K562 (cell line): ENCODE measurements at regions of chr15 and their contacts with region 1.

Region 1: DNA sequence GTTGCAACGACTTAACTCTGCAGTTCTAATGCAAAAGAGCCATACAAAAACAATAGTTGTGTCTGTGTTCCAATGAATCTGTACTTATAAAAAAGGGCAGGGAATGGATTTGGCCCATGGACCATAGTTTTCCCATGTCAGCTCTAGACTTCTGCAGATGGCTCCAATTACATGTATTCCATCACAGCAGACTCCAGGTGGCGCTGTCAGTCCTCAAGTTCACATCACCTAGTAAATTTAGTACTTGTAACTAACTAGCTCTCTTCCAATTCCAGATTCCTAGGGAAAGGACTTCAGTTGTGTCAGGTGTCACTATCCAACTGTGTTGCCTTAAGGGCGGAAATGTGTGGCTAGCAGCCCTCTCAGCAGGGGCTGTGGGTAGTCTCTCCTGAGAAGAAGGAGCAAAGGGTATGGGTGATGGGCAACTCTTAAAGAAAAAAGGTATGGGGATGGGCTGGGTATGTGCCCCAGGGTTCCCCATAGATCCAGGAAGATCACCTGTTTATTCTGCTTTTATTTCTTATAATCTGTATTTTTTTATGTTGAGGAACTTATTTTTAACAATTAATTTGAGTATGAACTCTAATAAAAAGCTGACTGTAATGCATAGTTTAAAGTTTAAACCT is 36.2 kb downstream of the BBS4 start:
- DNase-seq: peak; percentile 21 to 73 (median 40)
- ATAC-seq: peak; percentile 79
- H3K4me3 ChIP-seq: no peak overlapping the region
- H3K27ac ChIP-seq: no peak overlapping the region
- H3K4me1 ChIP-seq: no peaks in the 10 kb centered on the region
- H3K27me3 ChIP-seq: no peaks in the 10 kb centered on the region
- CTCF ChIP-seq: peak; percentile 64 to 83 (median 78)
- EP300 ChIP-seq: no peak
- POLR2A ChIP-seq: no peak
- RAD21 ChIP-seq: peak; percentile 43 to 70

Region 2: DNA sequence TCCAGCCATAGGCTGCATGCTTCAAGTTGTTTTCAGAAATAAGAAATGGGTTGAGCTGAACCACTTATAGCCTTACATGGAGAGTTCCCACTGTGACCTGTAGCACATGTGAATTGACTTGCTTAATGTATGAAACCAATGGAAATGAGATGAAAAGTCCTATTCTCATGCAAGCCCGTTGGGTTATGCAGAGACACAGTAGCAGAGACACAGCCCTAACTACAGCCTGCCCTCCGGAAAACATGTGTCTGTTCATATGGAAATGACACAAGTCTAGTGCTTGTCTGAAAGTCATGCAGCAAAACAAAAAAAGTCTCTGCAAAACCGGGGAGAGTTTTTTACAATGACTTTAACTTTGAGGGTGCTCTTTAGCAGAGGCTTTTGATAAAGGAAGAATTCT is 50.6 kb before region 1 on chr15:
- CTCF ChIA-PET with region 1: no interaction called
- POLR2A ChIA-PET with region 1: no interaction called
- in situ Hi-C with region 1: no loop called
- intact Hi-C with region 1: no loop called
- DNase-seq: no peak
- ATAC-seq: no peak; the same call in 2 of the 3 replicates
- H3K4me3 ChIP-seq: no peak overlapping the region
- H3K27ac ChIP-seq: no peak overlapping the region
- H3K4me1 ChIP-seq: peaks cover 0 to 3% of the 10 kb centered on the region in 2 experiments; a peak in 2 of 5 replicates
- H3K27me3 ChIP-seq: peaks cover 14 to 16% of the 10 kb centered on the region in 2 experiments; a peak in 3 of 5 replicates
- CTCF ChIP-seq: no peak
- EP300 ChIP-seq: no peak
- POLR2A ChIP-seq: no peak
- RAD21 ChIP-seq: no peak

Region 3: DNA sequence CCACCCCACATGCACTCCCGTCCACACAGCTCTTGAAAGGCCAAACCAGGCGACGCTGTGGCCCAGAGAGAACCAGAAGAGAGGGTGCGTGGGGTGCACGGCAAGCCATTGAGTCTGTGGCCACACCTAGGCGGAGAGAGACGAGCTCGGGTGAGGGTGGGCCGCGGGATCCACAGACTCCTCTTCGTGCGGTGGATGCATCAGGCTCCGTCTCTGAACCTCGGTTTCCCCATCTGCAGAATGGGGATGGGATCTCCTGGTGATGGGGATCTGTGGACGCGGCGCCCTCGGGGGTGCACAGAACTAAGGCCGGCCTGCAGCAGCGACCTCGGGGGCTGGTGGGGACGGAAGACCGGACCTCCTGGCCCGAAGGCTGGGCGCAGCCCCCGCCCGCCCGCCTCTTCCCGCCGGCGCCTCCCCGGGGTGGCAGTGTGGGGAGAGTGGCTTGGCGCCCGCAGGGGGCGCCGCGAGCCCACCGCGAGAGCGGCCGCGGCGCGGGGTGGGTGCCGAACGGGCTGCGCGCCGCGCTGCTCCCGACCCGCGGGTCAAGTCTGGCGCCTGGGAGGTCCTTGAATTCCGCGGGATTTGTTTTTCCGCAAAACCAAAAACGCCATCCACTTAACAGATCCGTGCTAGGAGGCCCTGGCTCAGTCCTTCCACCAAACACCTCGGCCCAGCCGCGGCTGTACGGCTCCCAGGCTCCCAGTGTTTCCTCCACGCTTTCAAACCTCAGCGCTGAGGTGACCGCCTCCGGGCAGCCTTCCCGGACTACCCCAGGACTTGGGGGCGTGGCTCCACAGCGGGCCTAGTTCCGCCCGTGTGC is 74.5 kb after region 1 on chr15:
- CTCF ChIA-PET with region 1: interaction called, 3 read pairs
- POLR2A ChIA-PET with region 1: no interaction called
- in situ Hi-C with region 1: no loop called
- intact Hi-C with region 1: loop called (anchors 10 kb)
- DNase-seq: peak; percentile 49 to 79 (median 76)
- ATAC-seq: peak; percentile 95
- H3K4me3 ChIP-seq: peak overlapping the region; percentile 38
- H3K27ac ChIP-seq: no peak overlapping the region
- H3K4me1 ChIP-seq: peaks cover 0 to 12% of the 10 kb centered on the region in 2 experiments; a peak in 3 of 5 replicates
- H3K27me3 ChIP-seq: peaks cover 16 to 27% of the 10 kb centered on the region in 2 experiments; a peak in 4 of 5 replicates
- CTCF ChIP-seq: peak in 2 of 3 experiments; percentile 57 to 86; a peak in 4 of 6 replicates
- EP300 ChIP-seq: no peak
- POLR2A ChIP-seq: no peak
- RAD21 ChIP-seq: peak; percentile 60 to 78